ENCODE measurements at regions of chr19 and their contacts with region 1.

Region 1: GRCh38 chr19:54928299-54928698 is 19.0 kb downstream of the NLRP7 start:
- DNase-seq: no peak
- ATAC-seq: no peak
- H3K4me3 ChIP-seq: no peak overlapping the region
- H3K27ac ChIP-seq: no peak overlapping the region
- H3K4me1 ChIP-seq: no peaks in the 10 kb centered on the region
- H3K27me3 ChIP-seq: peaks cover 0 to 3% (median 0%) of the 10 kb centered on the region in 9 donors
- CTCF ChIP-seq: no peak
- POLR2A ChIP-seq: no peak

Region 2: GRCh38 chr19:54653181-54653809 is 275.0 kb before region 1 on chr19:
- intact Hi-C with region 1: loop called in 1 of 10 experiments (anchors 10 kb)
- DNase-seq: no peak
- ATAC-seq: no peak
- H3K4me3 ChIP-seq: no peak overlapping the region
- H3K27ac ChIP-seq: no peak overlapping the region
- H3K4me1 ChIP-seq: peaks cover 0 to 8% (median 0%) of the 10 kb centered on the region in 12 donors
- H3K27me3 ChIP-seq: peaks cover 0 to 11% (median 7%) of the 10 kb centered on the region in 9 donors
- CTCF ChIP-seq: peak; percentile 27 to 65 (median 50)
- POLR2A ChIP-seq: no peak

Region 3: DNA sequence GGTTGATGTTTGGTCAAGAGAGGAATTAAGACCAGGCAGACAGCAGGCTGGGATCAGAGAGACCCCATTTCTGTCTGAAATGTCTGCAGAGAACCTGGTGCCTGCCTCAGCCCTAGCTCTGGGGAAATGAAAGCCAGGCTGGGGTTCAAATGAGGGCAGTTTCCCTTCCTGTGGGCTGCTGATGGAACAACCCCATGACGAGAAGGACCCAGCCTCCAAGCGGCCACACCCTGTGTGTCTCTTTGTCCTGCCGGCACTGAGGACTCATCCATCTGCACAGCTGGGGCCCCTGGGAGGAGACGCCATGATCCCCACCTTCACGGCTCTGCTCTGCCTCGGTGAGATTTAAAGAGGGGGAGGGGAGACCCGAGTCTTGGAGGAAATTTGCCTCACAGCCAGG is 265.6 kb before region 1 on chr19 and contains the start of gene LILRB4:
- intact Hi-C with region 1: loop called in 2 of 10 experiments (anchors 10 kb)
- DNase-seq: peak; percentile 28 to 71 (median 51)
- ATAC-seq: peak in 3 of 4 donors; percentile 56 to 82 (median 67)
- H3K4me3 ChIP-seq: peak within 1 kb of the TSS in 6 of 12 donors; percentile 21 to 53 (median 28)
- H3K27ac ChIP-seq: peak within 1 kb of the TSS in 1 of 12 donors; percentile 67
- H3K4me1 ChIP-seq: peaks cover 0 to 15% (median 0%) of the 10 kb centered on the region in 12 donors
- H3K27me3 ChIP-seq: peaks cover 0 to 10% (median 0%) of the 10 kb centered on the region in 9 donors
- CTCF ChIP-seq: no peak
- POLR2A ChIP-seq: no peak
- total RNA-seq, gene LILRB4: 0.97 to 40.9 (median 2.6) TPM

Region 4: GRCh38 chr19:54674021-54674617 is 254.2 kb before region 1 on chr19:
- intact Hi-C with region 1: loop called in 2 of 10 experiments (anchors 10 kb)
- DNase-seq: no peak
- ATAC-seq: no peak
- H3K4me3 ChIP-seq: no peak overlapping the region
- H3K27ac ChIP-seq: no peak overlapping the region
- H3K4me1 ChIP-seq: peaks cover 0 to 16% (median 0%) of the 10 kb centered on the region in 12 donors
- H3K27me3 ChIP-seq: peaks cover 0 to 30% (median 0%) of the 10 kb centered on the region in 9 donors
- CTCF ChIP-seq: peak; percentile 38 to 66 (median 56)
- POLR2A ChIP-seq: no peak

Measured in heart left ventricle (tissue), 16 donors.